ENCODE measurements at regions of chr20 and their contacts with region 1.

Region 1: DNA sequence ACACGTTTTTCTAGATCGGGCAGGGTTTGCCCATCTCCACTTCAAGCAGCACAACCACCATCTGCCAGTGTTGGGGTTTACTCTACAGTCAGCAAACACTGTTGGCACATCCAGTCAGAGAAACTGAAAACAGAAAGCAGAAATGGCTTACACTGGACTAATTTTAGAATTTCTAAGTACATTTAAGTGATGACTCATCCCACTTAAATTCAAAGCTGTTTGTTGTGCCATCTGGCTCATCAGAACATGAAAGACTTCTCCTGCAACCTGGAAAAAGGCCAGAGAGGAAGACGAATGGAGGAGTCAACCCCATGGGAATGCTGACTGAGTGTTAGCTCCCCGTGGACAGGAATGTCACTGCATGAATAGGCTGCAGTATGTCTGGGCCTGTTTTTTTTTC is 21.8 kb downstream of the FAM209B start:
- DNase-seq: peak; percentile 24
- H3K4me3 Mint-ChIP-seq: no peak overlapping the region
- H3K27ac Mint-ChIP-seq: no peak overlapping the region
- H3K4me1 Mint-ChIP-seq: peaks cover 7% of the 10 kb centered on the region
- H3K27me3 Mint-ChIP-seq: no peaks in the 10 kb centered on the region

Region 2: DNA sequence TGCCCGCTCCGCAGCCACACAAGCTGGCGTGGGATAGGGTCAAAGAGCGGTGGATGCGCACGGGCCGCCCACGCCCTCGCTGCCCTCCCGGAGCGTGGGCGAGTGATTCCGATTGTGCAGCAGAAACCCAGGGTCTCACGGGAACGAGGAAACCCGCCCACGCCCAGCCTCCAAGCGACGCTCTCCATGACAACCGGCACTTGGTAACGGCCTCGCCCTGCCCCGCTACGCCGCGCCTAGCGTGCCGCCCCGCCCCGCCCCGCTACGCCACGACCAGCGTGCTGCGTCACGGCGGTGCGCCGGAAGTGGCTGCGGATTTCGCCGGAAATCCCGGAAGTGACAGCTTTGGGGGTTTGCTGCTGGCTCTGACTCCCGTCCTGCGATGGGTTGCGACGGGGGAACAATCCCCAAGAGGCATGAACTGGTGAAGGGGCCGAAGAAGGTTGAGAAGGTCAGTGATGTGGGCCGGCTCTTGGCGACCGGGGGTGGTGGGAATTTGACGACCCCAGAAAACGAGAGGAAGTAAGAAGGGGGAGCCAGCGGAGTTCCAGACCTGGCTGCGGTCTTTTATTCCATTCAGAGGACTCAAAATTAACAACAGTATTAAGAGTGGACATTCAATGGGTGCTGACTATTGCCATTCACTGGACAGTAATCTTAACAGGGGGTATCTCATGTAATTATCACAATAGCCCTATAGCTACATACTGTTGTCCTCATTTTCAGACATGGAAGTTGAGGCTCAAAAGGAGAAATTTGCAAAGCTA is 86.4 kb before region 1 on chr20 and contains the start of gene RTF2:
- CTCF ChIA-PET with region 1: no interaction called
- intact Hi-C with region 1: no loop called
- DNase-seq: peak; percentile 95
- H3K4me3 Mint-ChIP-seq: peak within 1 kb of the TSS; percentile 100
- H3K27ac Mint-ChIP-seq: peak within 1 kb of the TSS; percentile 98
- H3K4me1 Mint-ChIP-seq: peaks cover 29% of the 10 kb centered on the region
- H3K27me3 Mint-ChIP-seq: no peaks in the 10 kb centered on the region
- total RNA-seq, gene RTF2: 76.8 to 82.9 TPM

Region 3: GRCh38 chr20:56574531-56575142 is 19.8 kb after region 1 on chr20:
- CTCF ChIA-PET with region 1: interaction called, 18 read pairs
- intact Hi-C with region 1: loop called (anchors 1 kb)
- DNase-seq: no peak
- H3K4me3 Mint-ChIP-seq: no peak overlapping the region
- H3K27ac Mint-ChIP-seq: no peak overlapping the region
- H3K4me1 Mint-ChIP-seq: no peaks in the 10 kb centered on the region
- H3K27me3 Mint-ChIP-seq: peaks cover 6% of the 10 kb centered on the region

Region 4: DNA sequence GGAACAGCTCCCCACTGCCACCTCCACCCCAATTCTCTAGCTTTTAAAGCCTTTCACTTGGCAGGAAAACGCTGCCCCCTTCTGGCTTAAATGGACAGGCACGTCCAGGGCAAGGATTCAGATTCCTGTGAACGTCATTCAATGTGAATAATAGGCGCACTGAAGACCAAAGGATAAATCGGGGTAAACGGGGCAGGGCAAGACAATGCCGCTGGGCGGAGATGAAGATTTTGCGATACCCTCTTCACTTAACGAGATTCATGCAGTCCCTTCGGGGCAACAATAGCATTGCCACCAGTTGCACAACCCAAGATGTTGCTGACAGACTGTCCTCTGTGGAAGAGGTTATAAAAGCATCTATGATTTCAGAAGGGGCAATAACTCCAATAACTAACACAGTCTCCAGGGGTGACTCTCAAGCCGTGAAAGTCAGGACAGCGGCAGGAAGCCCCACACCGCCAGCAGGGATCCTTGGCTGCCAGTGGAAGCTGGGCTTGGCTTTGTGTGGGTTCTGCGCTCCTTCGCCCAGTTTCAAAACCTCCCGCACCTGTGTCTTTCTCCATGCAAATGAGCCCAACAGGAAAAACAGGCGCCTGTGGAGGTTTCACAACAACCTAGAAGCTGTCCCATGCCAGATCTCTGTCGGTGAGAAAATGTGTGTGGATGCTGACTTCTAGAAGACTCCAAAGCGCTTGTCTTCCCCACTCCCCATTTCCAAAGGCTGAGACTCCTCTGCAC is 419.8 kb after region 1 on chr20:
- CTCF ChIA-PET with region 1: interaction called, 6 read pairs
- intact Hi-C with region 1: loop called (anchors 1 kb)
- DNase-seq: peak; percentile 50
- H3K4me3 Mint-ChIP-seq: no peak overlapping the region
- H3K27ac Mint-ChIP-seq: no peak overlapping the region
- H3K4me1 Mint-ChIP-seq: no peaks in the 10 kb centered on the region
- H3K27me3 Mint-ChIP-seq: peaks cover 45% of the 10 kb centered on the region

Region 5: GRCh38 chr20:56995576-56996075 is 440.8 kb after region 1 on chr20:
- CTCF ChIA-PET with region 1: interaction called, 4 read pairs
- intact Hi-C with region 1: loop called (anchors 1 kb)
- DNase-seq: peak; percentile 32
- H3K4me3 Mint-ChIP-seq: no peak overlapping the region
- H3K27ac Mint-ChIP-seq: no peak overlapping the region
- H3K4me1 Mint-ChIP-seq: no peaks in the 10 kb centered on the region
- H3K27me3 Mint-ChIP-seq: peaks cover 5% of the 10 kb centered on the region

Region 6: DNA sequence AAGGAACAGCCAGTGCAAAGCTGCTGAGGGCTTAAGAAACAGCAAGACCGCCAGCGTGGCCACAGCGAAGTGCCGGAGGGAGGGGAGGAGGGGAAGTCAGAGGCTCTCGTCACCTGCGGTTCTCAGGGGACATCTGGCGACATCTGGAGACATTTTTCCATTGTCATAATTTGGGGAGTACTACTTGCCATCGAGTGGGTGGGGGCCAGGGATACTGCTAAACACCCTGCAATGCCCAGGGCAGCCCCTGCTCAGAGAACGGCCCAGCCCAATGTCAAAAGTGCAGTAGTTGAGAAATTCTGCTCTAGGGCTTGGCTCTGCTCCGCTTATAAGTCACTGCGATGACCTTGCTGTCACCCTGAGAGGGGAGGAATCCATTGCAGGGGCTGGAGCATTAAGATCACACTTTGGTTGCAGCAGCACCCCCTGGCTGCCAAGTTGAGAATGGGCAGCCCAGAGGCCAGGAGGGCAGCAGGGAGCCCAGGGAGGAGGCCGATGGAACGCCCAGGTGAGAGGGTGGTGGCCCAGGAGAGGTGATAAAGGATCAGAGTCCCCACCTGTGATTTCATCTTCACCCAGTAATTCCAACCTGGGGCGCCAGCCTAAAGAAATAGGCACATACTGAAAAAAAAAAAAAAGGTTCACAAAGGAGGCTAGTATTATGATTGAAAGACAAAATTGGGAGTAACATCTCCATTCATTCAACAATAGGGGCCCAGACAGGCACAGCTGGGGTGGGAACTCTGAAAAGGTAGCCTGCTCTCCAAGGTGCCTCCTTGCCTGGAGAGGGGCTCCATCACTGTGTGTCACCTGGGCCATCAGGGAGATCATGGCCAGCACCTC is 493.4 kb after region 1 on chr20:
- CTCF ChIA-PET with region 1: interaction called, 3 read pairs
- intact Hi-C with region 1: loop called (anchors 1 kb)
- DNase-seq: peak; percentile 23
- H3K4me3 Mint-ChIP-seq: no peak overlapping the region
- H3K27ac Mint-ChIP-seq: no peak overlapping the region
- H3K4me1 Mint-ChIP-seq: no peaks in the 10 kb centered on the region
- H3K27me3 Mint-ChIP-seq: peaks cover 5% of the 10 kb centered on the region

Region 7: GRCh38 chr20:57061058-57061900 is 506.4 kb after region 1 on chr20:
- CTCF ChIA-PET with region 1: interaction called, 5 read pairs
- intact Hi-C with region 1: loop called (anchors 2 kb)
- DNase-seq: peak; percentile 13
- H3K4me3 Mint-ChIP-seq: no peak overlapping the region
- H3K27ac Mint-ChIP-seq: no peak overlapping the region
- H3K4me1 Mint-ChIP-seq: no peaks in the 10 kb centered on the region
- H3K27me3 Mint-ChIP-seq: peaks cover 27% of the 10 kb centered on the region

Region 8: GRCh38 chr20:57351042-57351783 is 796.3 kb after region 1 on chr20 and contains the start of gene RAE1:
- CTCF ChIA-PET with region 1: interaction called, 5 read pairs
- intact Hi-C with region 1: loop called (anchors 2 kb)
- DNase-seq: peak; percentile 94
- H3K4me3 Mint-ChIP-seq: peak within 1 kb of the TSS; percentile 81
- H3K27ac Mint-ChIP-seq: peak within 1 kb of the TSS; percentile 83
- H3K4me1 Mint-ChIP-seq: peaks cover 22% of the 10 kb centered on the region
- H3K27me3 Mint-ChIP-seq: no peaks in the 10 kb centered on the region
- total RNA-seq, gene RAE1: 45.6 to 46.5 TPM